ENCODE measurements at regions of chr4 and their contacts with region 1.

Region 1: GRCh38 chr4:168710353-168710946 is 213.6 kb downstream of the PALLD start:
- DNase-seq: no peak
- H3K4me3 ChIP-seq: no peak overlapping the region
- CTCF ChIP-seq: peak; percentile 43

Region 2: GRCh38 chr4:168585168-168586091 is 125.0 kb before region 1 on chr4:
- CTCF ChIA-PET with region 1: interaction called, 30 read pairs
- POLR2A ChIA-PET with region 1: no interaction called
- DNase-seq: no peak
- H3K4me3 ChIP-seq: no peak overlapping the region
- CTCF ChIP-seq: peak; percentile 79

Region 3: GRCh38 chr4:168699224-168699878 is 11.1 kb before region 1 on chr4:
- CTCF ChIA-PET with region 1: interaction called, 14 read pairs
- POLR2A ChIA-PET with region 1: no interaction called
- DNase-seq: no peak
- H3K4me3 ChIP-seq: no peak overlapping the region
- CTCF ChIP-seq: no peak

Region 4: DNA sequence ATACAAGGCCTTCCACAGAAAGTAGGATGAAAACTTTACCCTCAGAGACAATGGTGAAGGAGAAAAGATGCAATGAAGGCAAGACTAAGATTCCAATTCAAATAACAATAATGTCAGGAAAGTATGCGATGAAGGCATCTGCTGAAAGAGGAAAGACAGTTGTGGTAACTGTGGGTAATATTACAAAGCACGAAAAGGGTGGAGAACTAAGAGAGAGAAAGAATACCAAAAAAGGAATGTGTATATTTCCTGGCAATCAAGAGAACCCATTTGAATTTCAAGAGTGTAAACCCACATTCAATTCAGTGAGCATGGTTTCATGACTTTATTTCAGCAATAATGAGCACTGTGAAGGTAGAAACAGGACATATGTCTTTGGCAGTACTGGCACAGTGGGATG is 11.9 kb after region 1 on chr4:
- CTCF ChIA-PET with region 1: interaction called, 17 read pairs
- POLR2A ChIA-PET with region 1: no interaction called
- DNase-seq: no peak
- H3K4me3 ChIP-seq: no peak overlapping the region
- CTCF ChIP-seq: no peak

Region 5: GRCh38 chr4:168784786-168785461 is 74.5 kb after region 1 on chr4:
- CTCF ChIA-PET with region 1: no interaction called
- POLR2A ChIA-PET with region 1: no interaction called
- DNase-seq: no peak
- H3K4me3 ChIP-seq: no peak overlapping the region
- CTCF ChIP-seq: no peak

Region 6: GRCh38 chr4:168831919-168832762 is 121.7 kb after region 1 on chr4:
- CTCF ChIA-PET with region 1: interaction called, 34 read pairs
- POLR2A ChIA-PET with region 1: interaction called, 5 read pairs
- DNase-seq: no peak
- H3K4me3 ChIP-seq: peak overlapping the region; percentile 91
- CTCF ChIP-seq: no peak